ENCODE measurements at regions of chr9 and their contacts with region 1.

Region 1: GRCh38 chr9:133478851-133479711 is at the start of gene SLC2A6:
- H3K4me3 Mint-ChIP-seq: peak within 1 kb of the TSS; percentile 86
- H3K27ac Mint-ChIP-seq: peak within 1 kb of the TSS; percentile 79
- H3K4me1 Mint-ChIP-seq: peaks cover 49% of the 10 kb centered on the region
- H3K27me3 Mint-ChIP-seq: peaks cover 39% of the 10 kb centered on the region

Region 2: DNA sequence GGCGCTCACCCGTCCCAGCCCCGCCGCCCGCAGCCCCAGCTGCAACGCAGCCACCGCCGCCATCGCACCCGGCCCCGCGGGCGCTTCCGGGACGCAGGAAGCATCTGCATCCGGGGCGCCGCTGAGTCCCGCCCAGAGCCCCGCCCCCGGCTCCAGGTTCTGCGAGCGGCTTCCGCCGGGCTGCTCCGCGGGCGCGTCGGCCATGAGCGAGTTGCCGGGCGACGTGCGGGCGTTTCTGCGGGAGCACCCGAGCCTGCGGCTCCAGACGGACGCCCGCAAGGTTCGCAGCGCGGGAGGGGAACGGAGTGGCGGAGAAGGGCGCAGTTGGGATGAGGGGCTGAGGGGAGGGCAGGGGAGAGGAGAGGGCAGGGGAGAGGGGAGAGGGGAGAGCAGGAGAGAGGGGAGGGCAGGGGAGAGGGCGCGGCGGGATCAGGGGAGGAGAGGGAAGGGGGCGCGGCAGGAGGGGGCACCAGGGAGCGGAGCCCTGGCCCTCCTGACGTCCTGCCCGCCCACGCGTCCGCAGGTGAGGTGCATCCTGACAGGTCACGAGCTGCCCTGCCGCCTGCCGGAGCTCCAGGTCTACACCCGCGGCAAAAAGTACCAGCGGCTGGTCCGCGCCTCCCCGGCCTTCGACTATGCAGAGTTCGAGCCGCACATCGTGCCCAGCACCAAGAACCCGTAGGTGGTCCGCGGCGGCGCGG is 122.5 kb before region 1 on chr9 and contains the starts of genes SURF1 and SURF2:
- intact Hi-C with region 1: loop called (anchors 5 kb)
- H3K4me3 Mint-ChIP-seq: peak within 1 kb of the TSS; percentile 90
- H3K27ac Mint-ChIP-seq: peak within 1 kb of the TSS; percentile 79
- H3K4me1 Mint-ChIP-seq: peaks cover 35% of the 10 kb centered on the region
- H3K27me3 Mint-ChIP-seq: no peaks in the 10 kb centered on the region

Measured in dendritic cell treated with granulocyte-macrophage colony-stimulating factor and Interleukin-4, amounts not matched to agents 40 ng/mL and 50 ng/mL, for 4 days (primary cell).